ENCODE measurements at regions of chr4 and their contacts with region 1.

Region 1: DNA sequence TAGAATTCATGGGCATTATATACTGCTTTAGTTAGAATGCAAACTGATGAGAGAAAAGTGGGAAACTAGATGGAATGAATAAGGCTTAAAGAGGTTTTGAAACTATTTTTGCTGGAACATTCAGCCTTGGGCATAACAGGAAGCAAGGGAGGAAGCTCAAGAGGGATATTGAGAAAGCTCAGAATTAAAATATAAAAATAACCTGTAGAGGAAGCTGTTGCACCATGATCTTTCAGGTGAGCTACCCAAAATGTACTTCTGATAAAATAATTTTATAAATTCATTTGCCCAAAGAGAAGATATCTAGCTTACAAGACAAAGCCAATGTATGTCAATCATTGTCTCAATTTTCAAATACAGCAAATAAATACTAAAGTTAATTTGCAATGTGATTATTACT is 11.3 kb downstream of the GC start:
- DNase-seq: no peak
- ATAC-seq: peak; percentile 32; the same call in 1 of the 2 replicates
- H3K4me3 Mint-ChIP-seq: no peak overlapping the region
- H3K27ac Mint-ChIP-seq: peak overlapping the region; percentile 80; the same call in 1 of the 2 replicates
- H3K4me1 Mint-ChIP-seq: peaks cover 37% of the 10 kb centered on the region
- H3K27me3 Mint-ChIP-seq: no peaks in the 10 kb centered on the region
- CTCF ChIP-seq: no peak

Region 2: DNA sequence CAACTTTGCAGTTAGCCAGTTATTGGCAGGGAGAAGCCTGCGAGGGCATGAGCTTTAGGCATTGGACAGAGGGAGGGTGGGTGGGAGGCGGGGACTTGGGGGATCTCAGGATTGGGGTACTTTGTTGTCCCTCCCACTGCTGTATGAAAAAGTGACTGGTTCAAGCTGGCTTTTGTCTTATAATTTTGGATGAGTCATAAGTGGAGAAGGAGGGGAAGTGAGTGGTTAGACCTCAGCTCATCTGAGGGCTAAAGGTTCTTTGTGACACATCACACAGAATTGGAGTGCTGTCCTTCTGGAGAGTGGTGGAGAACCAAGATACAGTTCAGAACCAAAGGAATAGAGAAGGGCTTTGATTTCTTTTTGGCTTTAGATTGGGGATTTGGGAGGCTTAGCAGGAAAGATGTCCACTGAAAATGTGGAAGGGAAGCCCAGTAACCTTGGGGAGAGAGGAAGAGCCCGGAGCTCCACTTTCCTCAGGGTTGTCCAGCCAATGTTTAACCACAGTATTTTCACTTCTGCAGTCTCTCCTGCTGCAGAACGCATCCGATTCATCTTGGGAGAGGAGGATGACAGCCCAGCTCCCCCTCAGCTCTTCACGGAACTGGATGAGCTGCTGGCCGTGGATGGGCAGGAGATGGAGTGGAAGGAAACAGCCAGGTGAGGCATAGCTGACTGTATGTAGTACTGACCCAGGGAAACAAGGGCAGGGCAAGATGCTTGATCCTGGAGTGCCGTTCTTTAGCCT is 433.6 kb before region 1 on chr4 and contains the start of gene SLC4A4:
- CTCF ChIA-PET with region 1: no interaction called
- POLR2A ChIA-PET with region 1: no interaction called
- DNase-seq: no peak
- ATAC-seq: no peak
- H3K4me3 Mint-ChIP-seq: no peak within 1 kb of the TSS
- H3K27ac Mint-ChIP-seq: no peak within 1 kb of the TSS
- H3K4me1 Mint-ChIP-seq: no peaks in the 10 kb centered on the region
- H3K27me3 Mint-ChIP-seq: no peaks in the 10 kb centered on the region
- CTCF ChIP-seq: no peak
- total RNA-seq, gene SLC4A4: 1.1 to 1.5 TPM (median 1.2 TPM) in 3 replicates

Region 3: DNA sequence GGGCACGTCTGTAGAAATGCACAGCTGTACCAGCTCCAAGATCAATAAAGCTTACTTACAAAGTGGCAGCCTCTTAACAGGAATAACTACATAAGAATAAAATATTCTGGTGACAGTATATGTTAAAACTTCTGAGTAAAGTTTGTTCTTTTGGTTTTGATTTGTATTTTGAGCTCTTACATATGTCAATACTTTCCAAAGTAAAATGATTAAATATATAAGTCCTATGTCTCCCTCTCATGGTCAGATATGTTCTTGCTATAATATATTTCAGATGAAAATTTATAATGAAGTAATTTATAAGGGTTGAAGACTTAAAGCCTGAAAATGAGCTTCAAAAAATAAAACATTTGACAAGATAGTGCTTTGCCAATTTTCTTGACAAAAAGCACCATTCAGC is 513.6 kb after region 1 on chr4:
- CTCF ChIA-PET with region 1: interaction called, 17 read pairs
- POLR2A ChIA-PET with region 1: no interaction called
- DNase-seq: no peak
- ATAC-seq: no peak
- H3K4me3 Mint-ChIP-seq: no peak overlapping the region
- H3K27ac Mint-ChIP-seq: no peak overlapping the region
- H3K4me1 Mint-ChIP-seq: peaks cover 7% of the 10 kb centered on the region; the same call in 1 of the 2 replicates
- H3K27me3 Mint-ChIP-seq: no peaks in the 10 kb centered on the region
- CTCF ChIP-seq: no peak